ENCODE measurements at regions of chr7 and their contacts with region 1.

Region 1: DNA sequence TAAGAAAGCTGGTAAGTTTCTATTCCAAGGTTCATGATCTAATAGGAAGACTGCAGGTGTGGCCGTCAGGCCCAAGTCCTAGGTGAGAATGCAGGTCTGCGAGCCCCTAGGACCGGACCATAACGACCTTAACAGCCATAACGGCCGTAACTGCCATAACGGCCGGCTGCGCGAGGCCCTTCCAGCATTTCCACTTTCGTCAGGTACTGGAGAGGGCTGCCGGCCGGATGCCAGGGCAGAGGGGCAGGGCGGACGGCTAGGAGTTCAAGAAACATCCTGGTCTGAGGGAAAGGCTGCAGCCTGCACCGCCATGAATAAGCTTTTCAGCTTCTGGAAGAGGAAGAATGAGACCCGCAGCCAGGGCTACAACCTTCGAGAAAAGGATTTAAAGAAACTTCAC is at the start of gene ANKRD7:
- DNase-seq: no peak
- H3K4me3 ChIP-seq: no peak within 1 kb of the TSS
- H3K4me3 Mint-ChIP-seq: no peak within 1 kb of the TSS
- H3K27ac ChIP-seq: no peak within 1 kb of the TSS
- H3K27ac Mint-ChIP-seq: no peak within 1 kb of the TSS
- H3K4me1 ChIP-seq: no peaks in the 10 kb centered on the region
- H3K4me1 Mint-ChIP-seq: no peaks in the 10 kb centered on the region
- H3K27me3 ChIP-seq: no peaks in the 10 kb centered on the region
- H3K27me3 Mint-ChIP-seq: peaks cover 2 to 4% (median 2%) of the 10 kb centered on the region in 3 donors
- CTCF ChIP-seq: no peak
- polyA plus RNA-seq, gene ANKRD7: not detected

Region 2: GRCh38 chr7:117550625-117551024 is 673.9 kb before region 1 on chr7:
- intact Hi-C with region 1: loop called in 1 of 2 experiments (anchors 10 kb)
- DNase-seq: no peak
- H3K4me3 ChIP-seq: no peak overlapping the region
- H3K4me3 Mint-ChIP-seq: no peak overlapping the region
- H3K27ac ChIP-seq: no peak overlapping the region
- H3K27ac Mint-ChIP-seq: no peak overlapping the region
- H3K4me1 ChIP-seq: no peaks in the 10 kb centered on the region
- H3K4me1 Mint-ChIP-seq: no peaks in the 10 kb centered on the region
- H3K27me3 ChIP-seq: no peaks in the 10 kb centered on the region
- H3K27me3 Mint-ChIP-seq: no peaks in the 10 kb centered on the region
- CTCF ChIP-seq: no peak

Region 3: DNA sequence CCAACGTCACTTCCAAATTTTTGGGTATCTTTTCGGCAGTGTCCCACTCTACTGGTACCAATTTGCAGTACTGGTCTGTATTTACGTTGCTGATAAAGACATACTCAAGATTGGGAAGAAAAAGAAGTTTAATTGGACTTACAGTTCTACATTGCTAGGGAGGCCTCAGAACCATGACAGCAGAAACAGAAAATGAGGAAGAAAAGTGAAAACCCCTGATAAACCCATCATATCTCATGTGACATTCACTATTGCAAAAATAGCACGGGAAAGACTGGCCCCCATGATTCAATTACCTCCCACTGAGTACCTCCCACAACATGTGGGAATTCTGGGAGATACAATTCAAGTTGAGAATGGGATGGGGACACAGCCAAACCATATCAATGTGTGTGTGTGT is 1684.4 kb after region 1 on chr7:
- intact Hi-C with region 1: no loop called
- DNase-seq: no peak
- H3K4me3 ChIP-seq: no peak overlapping the region
- H3K4me3 Mint-ChIP-seq: no peak overlapping the region
- H3K27ac ChIP-seq: no peak overlapping the region
- H3K27ac Mint-ChIP-seq: no peak overlapping the region
- H3K4me1 ChIP-seq: no peaks in the 10 kb centered on the region
- H3K4me1 Mint-ChIP-seq: no peaks in the 10 kb centered on the region
- H3K27me3 ChIP-seq: no peaks in the 10 kb centered on the region
- H3K27me3 Mint-ChIP-seq: peaks cover 0 to 5% (median 2%) of the 10 kb centered on the region in 3 donors
- CTCF ChIP-seq: no peak